ENCODE measurements at regions of chr4 and their contacts with region 1.

Region 1: DNA sequence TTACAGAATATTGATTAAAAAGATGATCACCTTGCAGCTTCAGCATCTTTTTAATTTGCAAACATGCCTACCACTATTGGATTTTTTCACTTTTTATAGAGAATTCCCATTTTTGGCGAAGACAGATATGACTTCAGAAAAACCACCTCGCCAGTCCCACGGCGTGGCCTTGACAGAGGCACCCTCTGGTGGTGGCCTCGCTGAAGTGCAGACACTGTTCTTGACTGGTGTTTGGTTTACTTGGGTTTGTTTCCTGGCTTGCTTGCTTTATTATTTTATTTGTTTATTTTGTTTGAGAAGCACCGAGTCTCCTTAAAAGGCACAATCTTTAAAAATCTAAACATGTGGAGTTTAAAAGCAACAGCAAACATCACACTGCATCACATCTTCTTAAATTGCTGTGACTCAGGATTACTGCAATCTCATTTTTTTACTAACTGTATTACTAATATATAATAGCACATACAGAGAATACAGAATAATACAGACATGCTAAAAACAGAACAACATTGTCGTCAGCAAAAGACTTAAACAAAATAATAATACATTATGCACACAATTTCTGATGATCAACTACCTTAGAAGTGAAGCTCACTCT is 13.1 kb upstream of the AMTN start:
- DNase-seq: peak; percentile 43 to 71
- H3K4me3 ChIP-seq: no peak overlapping the region
- H3K4me3 Mint-ChIP-seq: no peak overlapping the region
- H3K27ac Mint-ChIP-seq: no peak overlapping the region
- H3K4me1 ChIP-seq: no peaks in the 10 kb centered on the region
- H3K4me1 Mint-ChIP-seq: no peaks in the 10 kb centered on the region
- H3K27me3 ChIP-seq: no peaks in the 10 kb centered on the region
- H3K27me3 Mint-ChIP-seq: no peaks in the 10 kb centered on the region
- CTCF ChIP-seq: peak; percentile 86 to 94

Region 2: DNA sequence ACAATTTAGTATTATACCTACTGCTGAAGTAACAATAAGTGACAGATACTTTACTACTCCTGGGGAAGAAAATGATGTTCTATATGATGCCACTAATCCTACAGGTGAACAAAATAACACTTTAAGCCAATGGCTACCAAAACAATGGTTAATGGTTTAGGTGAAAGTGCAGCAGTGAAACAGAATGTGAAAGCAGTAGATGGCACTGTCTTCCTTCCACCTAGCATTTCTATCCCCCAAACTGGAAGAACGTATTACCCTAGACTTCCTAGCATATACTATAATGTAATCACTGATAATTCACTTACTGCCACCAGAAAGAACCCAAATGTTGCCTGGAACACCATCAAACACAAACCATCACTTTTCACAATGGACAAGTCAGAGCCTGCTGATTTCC is 189.3 kb before region 1 on chr4:
- CTCF ChIA-PET with region 1: no interaction called
- POLR2A ChIA-PET with region 1: no interaction called
- intact Hi-C with region 1: loop called (anchors 1 kb)
- DNase-seq: no peak
- H3K4me3 ChIP-seq: no peak overlapping the region
- H3K4me3 Mint-ChIP-seq: no peak overlapping the region
- H3K27ac Mint-ChIP-seq: no peak overlapping the region
- H3K4me1 ChIP-seq: no peaks in the 10 kb centered on the region
- H3K4me1 Mint-ChIP-seq: no peaks in the 10 kb centered on the region
- H3K27me3 ChIP-seq: no peaks in the 10 kb centered on the region
- H3K27me3 Mint-ChIP-seq: peaks cover 3% of the 10 kb centered on the region
- CTCF ChIP-seq: no peak

Region 3: DNA sequence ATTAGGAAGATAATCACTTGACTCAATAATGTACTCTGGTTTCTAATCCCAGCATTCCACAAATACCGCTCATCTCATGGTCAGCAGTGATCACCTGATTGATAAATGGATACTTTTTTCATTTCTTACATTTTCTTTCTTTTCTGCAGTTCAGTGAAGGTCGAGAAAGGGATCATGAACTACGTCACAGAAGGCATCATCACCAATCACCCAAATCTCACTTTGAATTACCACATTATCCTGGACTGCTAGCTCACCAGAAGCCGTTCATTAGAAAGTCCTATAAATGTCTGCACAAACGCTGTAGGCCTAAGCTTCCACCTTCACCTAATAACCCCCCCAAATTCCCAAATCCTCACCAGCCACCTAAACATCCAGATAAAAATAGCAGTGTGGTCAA is 24.6 kb before region 1 on chr4:
- CTCF ChIA-PET with region 1: no interaction called
- POLR2A ChIA-PET with region 1: no interaction called
- intact Hi-C with region 1: no loop called
- DNase-seq: no peak
- H3K4me3 ChIP-seq: no peak overlapping the region
- H3K4me3 Mint-ChIP-seq: no peak overlapping the region
- H3K27ac Mint-ChIP-seq: no peak overlapping the region
- H3K4me1 ChIP-seq: no peaks in the 10 kb centered on the region
- H3K4me1 Mint-ChIP-seq: no peaks in the 10 kb centered on the region
- H3K27me3 ChIP-seq: no peaks in the 10 kb centered on the region
- H3K27me3 Mint-ChIP-seq: peaks cover 2% of the 10 kb centered on the region
- CTCF ChIP-seq: no peak